ENCODE measurements at regions of chr11 and their contacts with region 1.

Region 1: GRCh38 chr11:46295312-46296058 is 18.0 kb downstream of the CREB3L1 start:
- DNase-seq: peak; percentile 86

Region 2: GRCh38 chr11:46278387-46279125 is 16.9 kb before region 1 on chr11:
- intact Hi-C with region 1: loop called (anchors 2 kb)
- DNase-seq: no peak

Region 3: GRCh38 chr11:46378811-46379481 is 83.5 kb after region 1 on chr11:
- intact Hi-C with region 1: no loop called
- DNase-seq: no peak

Region 4: DNA sequence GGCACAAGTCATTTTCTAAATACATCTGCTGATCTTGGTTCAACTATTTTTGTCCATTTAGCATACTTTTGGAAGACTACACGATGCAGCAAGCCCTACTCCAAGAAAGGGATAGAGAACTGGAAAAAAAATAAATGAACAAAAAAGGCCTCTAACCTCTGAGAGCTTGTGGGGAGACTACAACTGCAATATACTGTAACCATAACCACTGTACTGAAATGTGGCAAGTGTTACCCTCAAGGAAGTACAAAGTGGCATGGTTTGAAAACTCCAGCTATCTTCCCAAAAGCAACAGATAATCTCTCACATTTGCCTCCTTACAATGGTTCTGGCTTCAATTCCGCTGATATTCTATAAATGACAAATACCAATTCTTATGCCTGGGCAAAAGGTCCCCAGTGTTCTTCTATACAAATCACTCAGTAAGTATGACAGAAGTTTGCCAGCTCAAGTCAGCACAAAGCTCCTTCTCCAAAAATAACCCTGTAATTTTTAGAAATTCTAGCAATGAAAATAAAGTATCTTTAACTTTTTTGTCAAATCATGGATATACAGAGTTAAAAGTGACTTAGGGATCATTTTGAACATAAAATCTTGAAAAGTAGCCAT is 275.4 kb after region 1 on chr11:
- intact Hi-C with region 1: no loop called
- DNase-seq: no peak